Activated naive CD4-positive, alpha-beta T cell treated with anti-CD3 and anti-CD28 coated beads for 36 hours (primary cell): ENCODE measurements at regions of chr2 and their contacts with region 1.

Region 1: DNA sequence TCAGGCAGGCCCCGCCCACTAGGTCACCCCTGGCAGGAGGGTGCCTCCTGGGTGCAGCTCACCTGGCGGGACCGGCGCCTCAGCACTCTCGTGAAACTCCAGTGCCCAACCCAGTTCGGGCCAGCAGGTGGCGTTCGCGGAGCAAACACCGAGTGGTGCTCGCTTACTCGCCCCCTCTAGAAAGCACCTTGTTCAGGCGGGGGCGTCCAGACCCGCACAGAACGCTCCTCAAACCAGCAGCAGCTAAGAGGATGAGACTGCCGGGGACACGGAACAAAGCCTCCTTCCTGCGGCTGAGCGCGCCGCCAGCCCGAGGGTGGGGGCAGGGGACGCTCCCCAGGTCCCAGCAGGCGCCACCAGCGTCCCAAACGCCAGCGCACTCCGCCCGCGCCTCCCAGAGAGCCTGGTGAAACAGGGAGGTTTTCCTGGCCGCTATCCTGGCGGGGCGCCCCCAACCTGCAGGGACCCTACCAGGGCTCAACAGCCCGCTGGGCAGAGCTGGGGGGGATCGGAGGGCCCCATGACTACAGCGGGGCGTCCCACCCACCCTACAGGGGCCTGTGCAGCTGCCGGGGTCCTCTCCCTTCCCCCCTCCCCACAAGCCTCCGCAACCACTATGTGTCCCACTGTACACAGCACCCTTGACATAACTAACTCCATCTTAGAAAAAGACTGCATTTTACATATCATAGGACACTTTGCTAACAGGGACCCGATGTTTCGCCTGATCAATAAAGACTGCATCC is 44.7 kb downstream of the MRPS5 start:
- DNase-seq: peak; percentile 96
- H3K4me3 Mint-ChIP-seq: peak overlapping the region; percentile 73
- H3K27ac Mint-ChIP-seq: peak overlapping the region; percentile 82
- H3K4me1 Mint-ChIP-seq: peaks cover 61% of the 10 kb centered on the region
- H3K27me3 Mint-ChIP-seq: no peaks in the 10 kb centered on the region

Region 2: DNA sequence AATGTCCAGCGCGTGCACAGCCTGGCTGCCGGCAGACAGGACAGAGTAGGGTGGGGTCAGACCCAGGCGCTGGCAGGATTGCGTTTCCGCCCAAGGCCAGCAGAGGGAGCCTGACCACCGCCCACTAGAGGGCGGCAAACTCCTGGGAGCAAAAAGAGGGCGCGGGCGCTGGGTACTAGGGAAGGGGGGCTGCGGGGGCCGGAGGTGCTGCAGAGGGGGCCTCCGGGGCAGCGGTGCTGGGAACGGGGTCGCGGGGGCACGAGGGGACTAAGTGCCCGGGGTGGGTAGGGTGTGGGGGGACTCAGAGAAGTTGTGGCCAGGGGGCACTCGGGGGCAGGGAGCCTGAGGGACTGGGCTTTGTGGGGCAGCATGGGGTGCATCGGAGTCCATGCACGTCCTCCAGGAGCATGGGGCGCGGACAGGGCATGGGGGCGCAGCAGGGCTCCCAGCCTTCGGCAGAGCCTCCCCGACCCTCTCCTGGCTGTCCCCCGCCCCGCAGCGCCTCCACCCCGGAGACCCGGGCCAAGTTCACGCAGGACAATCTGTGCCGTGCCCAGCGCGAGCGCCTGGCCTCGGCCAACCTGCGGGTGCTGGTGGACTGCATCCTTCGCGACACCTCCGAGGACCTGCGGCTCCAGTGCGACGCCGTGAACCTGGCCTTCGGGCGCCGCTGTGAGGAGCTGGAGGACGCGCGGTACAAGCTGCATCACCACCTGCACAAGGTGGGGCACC is 202.5 kb before region 1 on chr2:
- CTCF ChIA-PET with region 1: no interaction called
- intact Hi-C with region 1: loop called (anchors 5 kb)
- DNase-seq: peak; percentile 75
- H3K4me3 Mint-ChIP-seq: no peak overlapping the region
- H3K27ac Mint-ChIP-seq: no peak overlapping the region
- H3K4me1 Mint-ChIP-seq: no peaks in the 10 kb centered on the region
- H3K27me3 Mint-ChIP-seq: peaks cover 15% of the 10 kb centered on the region

Region 3: GRCh38 chr2:95012881-95013550 is 63.9 kb before region 1 on chr2:
- CTCF ChIA-PET with region 1: interaction called, 24 read pairs
- intact Hi-C with region 1: no loop called
- DNase-seq: no peak
- H3K4me3 Mint-ChIP-seq: no peak overlapping the region
- H3K27ac Mint-ChIP-seq: no peak overlapping the region
- H3K4me1 Mint-ChIP-seq: no peaks in the 10 kb centered on the region
- H3K27me3 Mint-ChIP-seq: no peaks in the 10 kb centered on the region

Region 4: DNA sequence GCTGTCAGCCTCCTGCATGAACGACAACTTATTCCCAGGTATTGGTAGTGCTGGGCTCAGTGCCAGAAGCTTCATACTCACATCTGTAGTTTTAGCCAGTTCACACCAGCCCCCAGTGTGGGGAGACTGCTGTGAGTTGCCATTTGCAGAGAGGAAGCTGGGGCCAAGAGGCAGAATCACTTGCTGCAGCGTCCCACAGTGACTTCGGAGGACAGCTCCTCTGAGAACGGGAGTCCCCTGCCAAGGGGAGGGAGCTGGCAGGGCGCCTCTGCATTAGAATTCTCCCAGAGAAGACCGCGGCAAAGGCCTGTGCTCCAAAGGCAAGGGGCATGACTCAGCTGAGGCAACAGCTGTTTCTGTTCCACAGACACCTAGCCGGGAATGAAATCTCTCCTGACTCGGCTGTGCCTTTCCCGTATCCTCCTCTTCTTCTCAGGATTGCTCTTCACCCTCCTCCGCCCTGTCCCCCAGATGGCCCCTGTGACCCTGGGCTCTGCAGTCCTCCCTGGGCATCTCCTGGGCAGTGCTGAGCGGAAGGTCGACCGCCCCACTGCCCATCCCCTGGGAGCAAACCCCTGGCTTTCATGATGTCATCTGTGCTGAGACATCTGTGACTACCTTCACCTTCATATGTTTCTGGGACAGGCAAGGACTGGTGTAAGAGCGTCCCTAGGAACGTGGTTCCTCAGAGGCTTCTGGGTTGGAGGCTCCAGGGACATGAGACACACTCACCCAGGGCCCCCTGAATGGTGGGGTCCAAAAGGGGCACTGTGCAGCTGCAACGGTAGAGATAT is 33.5 kb before region 1 on chr2:
- CTCF ChIA-PET with region 1: interaction called, 16 read pairs
- intact Hi-C with region 1: loop called (anchors 1 kb)
- DNase-seq: peak; percentile 83
- H3K4me3 Mint-ChIP-seq: no peak overlapping the region
- H3K27ac Mint-ChIP-seq: no peak overlapping the region
- H3K4me1 Mint-ChIP-seq: peaks cover 80% of the 10 kb centered on the region
- H3K27me3 Mint-ChIP-seq: no peaks in the 10 kb centered on the region

Region 5: DNA sequence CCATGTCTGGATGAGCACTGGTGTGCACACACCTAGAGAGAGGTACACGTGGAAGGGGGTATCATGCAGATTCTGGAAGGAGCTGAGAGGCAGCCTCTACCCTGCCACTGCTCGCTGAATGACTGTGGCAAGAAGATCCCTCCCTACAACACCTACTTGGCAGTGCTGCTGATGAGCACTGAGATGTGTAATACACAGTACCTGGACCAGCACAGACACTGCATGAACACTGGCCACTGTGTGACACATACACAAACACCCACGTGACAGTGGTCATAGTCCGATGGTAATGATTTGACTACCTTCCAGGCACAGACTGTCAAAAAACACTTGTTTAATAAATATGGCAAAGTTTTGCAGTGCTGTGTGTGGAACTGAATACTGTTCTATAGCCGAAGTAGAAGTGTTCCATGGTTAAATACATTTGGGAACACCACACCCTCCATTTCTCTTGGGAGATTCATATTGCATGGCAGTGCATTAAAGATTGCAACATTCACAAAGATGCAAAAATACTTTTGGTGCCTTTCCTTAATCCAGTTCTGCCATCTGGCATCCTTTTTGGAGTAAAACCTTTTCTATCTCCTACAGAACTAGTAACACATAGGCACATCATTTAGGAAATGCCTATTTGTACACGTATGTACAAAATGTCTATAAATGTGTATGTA is 15.1 kb after region 1 on chr2:
- CTCF ChIA-PET with region 1: interaction called, 24 read pairs
- intact Hi-C with region 1: no loop called
- DNase-seq: no peak
- H3K4me3 Mint-ChIP-seq: no peak overlapping the region
- H3K27ac Mint-ChIP-seq: no peak overlapping the region
- H3K4me1 Mint-ChIP-seq: peaks cover 18% of the 10 kb centered on the region
- H3K27me3 Mint-ChIP-seq: no peaks in the 10 kb centered on the region

Region 6: GRCh38 chr2:95165129-95166064 is 88.4 kb after region 1 on chr2 and contains the start of gene ZNF2:
- CTCF ChIA-PET with region 1: interaction called, 6 read pairs
- intact Hi-C with region 1: loop called (anchors 1 kb)
- DNase-seq: peak; percentile 99
- H3K4me3 Mint-ChIP-seq: peak within 1 kb of the TSS; percentile 99
- H3K27ac Mint-ChIP-seq: peak within 1 kb of the TSS; percentile 89
- H3K4me1 Mint-ChIP-seq: peaks cover 22% of the 10 kb centered on the region
- H3K27me3 Mint-ChIP-seq: no peaks in the 10 kb centered on the region
- total RNA-seq, gene ZNF2: 2.6 to 3.1 TPM

Region 7: GRCh38 chr2:96131152-96131812 is 1054.3 kb after region 1 on chr2:
- CTCF ChIA-PET with region 1: no interaction called
- intact Hi-C with region 1: no loop called
- DNase-seq: peak; percentile 58
- H3K4me3 Mint-ChIP-seq: no peak overlapping the region
- H3K27ac Mint-ChIP-seq: peak overlapping the region; percentile 84
- H3K4me1 Mint-ChIP-seq: peaks cover 16% of the 10 kb centered on the region
- H3K27me3 Mint-ChIP-seq: no peaks in the 10 kb centered on the region